ENCODE measurements at regions of chr1 and their contacts with region 1.

Region 1: GRCh38 chr1:220217383-220217988 is 54.8 kb downstream of the RAB3GAP2 start:
- DNase-seq: no peak
- CTCF ChIP-seq: peak; percentile 48

Region 2: GRCh38 chr1:219883400-219884332 is 333.8 kb before region 1 on chr1:
- CTCF ChIA-PET with region 1: no interaction called
- POLR2A ChIA-PET with region 1: no interaction called
- DNase-seq: no peak
- CTCF ChIP-seq: no peak

Region 3: DNA sequence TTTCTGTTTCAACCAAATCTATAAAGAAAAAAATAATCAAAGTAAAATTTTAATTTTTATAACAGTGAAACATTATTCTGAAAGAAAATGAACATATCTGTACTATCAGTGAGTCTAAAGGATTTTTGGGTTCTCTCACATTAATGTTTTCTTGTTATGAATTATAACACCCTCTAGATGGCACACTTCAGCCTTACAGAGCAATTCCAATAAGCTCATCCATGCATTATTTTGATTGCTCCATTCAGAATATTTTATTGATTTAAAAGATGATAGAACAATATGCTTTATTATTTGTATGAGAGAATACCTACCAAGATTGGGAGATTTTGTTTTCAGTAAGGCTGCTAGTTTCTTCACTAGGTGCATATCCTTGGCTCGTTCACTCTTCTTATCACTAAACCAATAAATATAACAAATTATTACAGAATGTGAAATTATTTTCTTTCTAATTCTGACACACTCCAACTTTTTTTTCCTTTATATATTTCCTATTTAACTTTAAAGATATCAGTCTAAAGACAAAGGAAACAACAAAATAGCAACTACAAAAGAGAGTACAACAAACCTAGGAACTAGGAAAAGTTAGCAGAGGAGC is 27.6 kb before region 1 on chr1:
- CTCF ChIA-PET with region 1: interaction called, 11 read pairs
- POLR2A ChIA-PET with region 1: no interaction called
- DNase-seq: peak; percentile 19
- CTCF ChIP-seq: peak; percentile 44

Region 4: GRCh38 chr1:220235462-220235861 is 18.0 kb after region 1 on chr1:
- CTCF ChIA-PET with region 1: interaction called, 75 read pairs
- POLR2A ChIA-PET with region 1: no interaction called
- DNase-seq: no peak
- CTCF ChIP-seq: no peak

Region 5: GRCh38 chr1:220281159-220281574 is 63.7 kb after region 1 on chr1:
- CTCF ChIA-PET with region 1: interaction called, 13 read pairs
- POLR2A ChIA-PET with region 1: no interaction called
- DNase-seq: no peak
- CTCF ChIP-seq: peak; percentile 12

Region 6: GRCh38 chr1:220733090-220733601 is 515.7 kb after region 1 on chr1:
- CTCF ChIA-PET with region 1: interaction called, 18 read pairs
- POLR2A ChIA-PET with region 1: no interaction called
- DNase-seq: peak; percentile 73
- CTCF ChIP-seq: peak; percentile 54

Measured in GM10248 (cell line).